ENCODE measurements at regions of chr14 and their contacts with region 1.

Region 1: DNA sequence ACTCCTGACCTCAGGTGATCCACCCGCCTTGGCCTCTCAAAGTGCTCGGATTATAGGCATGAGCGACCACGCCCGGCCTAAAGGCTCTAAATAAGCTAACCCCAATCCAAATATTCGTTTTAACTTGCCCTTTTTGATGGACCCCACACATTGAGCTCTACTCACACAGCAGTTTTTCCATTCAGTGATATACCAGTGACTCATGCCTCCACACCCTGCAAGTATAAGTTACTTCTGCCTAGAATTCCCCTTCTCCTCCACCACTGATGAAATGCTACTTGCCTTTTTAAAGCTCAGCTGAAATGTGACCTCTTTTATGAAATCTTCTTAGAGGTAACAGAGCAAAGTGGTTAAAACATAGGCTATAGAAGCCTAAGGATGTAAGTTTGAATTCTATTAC is 68.8 kb downstream of the EXOC5 start:
- DNase-seq: peak; percentile 56
- ATAC-seq: peak; percentile 73
- H3K4me3 ChIP-seq: no peak overlapping the region
- H3K27ac ChIP-seq: no peak overlapping the region
- H3K4me1 ChIP-seq: peaks cover 5% of the 10 kb centered on the region; the same call in 1 of the 2 replicates
- H3K27me3 ChIP-seq: no peaks in the 10 kb centered on the region
- CTCF ChIP-seq: no peak

Region 2: GRCh38 chr14:56570295-56570694 is 629.6 kb before region 1 on chr14:
- CTCF ChIA-PET with region 1: no interaction called
- POLR2A ChIA-PET with region 1: interaction called, 19 read pairs
- intact Hi-C with region 1: no loop called
- DNase-seq: no peak
- ATAC-seq: no peak
- H3K4me3 ChIP-seq: no peak overlapping the region
- H3K27ac ChIP-seq: no peak overlapping the region
- H3K4me1 ChIP-seq: no peaks in the 10 kb centered on the region
- H3K27me3 ChIP-seq: peaks cover 49% of the 10 kb centered on the region
- CTCF ChIP-seq: no peak

Measured in PC-3 (cell line).